ENCODE measurements at regions of chr15 and their contacts with region 1.

Region 1: DNA sequence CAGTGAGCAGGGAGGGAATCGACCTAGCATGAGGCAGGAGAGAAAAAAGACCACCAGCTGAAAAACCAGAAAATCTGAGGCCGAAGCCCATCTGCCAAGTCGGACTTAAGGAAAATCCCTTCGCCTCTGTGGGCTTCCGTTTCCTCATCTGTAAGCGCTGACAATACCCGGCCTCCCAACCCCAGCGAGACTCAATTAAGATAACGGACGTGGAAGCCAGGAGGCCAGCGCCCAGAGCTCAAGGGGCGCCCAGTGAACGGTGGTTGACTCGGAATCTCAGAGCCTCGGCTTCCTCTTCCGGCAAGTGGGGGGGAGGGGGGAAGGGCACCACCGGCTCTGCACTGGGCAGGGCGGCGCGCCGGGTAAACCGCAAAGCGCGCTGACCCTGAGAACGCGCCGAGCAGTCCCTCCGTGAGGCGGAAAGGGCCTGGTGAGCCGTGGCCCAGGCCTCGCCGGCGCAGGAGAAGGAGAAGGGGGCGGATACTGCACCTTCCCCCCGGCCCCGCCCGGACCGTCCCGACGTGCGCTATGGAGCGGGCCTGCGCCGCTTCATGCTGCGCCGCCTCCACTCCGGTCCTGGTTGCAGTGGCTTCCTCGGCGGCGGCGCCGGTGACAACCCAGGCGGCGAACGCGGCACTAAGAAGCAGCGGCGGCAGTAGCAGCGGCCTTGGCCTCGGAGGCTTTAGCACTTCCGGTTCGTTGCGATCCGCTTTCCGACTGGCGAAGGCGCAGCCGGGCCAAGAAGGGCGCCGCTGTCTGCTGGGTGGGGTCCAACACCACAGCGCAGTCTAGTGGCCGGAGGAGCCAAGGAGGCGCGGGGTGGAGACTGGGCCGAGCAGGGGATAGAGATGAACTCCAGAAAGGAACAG is at the start of gene DPP8:
- DNase-seq: peak; percentile 92
- CTCF ChIP-seq: peak; percentile 99

Region 2: DNA sequence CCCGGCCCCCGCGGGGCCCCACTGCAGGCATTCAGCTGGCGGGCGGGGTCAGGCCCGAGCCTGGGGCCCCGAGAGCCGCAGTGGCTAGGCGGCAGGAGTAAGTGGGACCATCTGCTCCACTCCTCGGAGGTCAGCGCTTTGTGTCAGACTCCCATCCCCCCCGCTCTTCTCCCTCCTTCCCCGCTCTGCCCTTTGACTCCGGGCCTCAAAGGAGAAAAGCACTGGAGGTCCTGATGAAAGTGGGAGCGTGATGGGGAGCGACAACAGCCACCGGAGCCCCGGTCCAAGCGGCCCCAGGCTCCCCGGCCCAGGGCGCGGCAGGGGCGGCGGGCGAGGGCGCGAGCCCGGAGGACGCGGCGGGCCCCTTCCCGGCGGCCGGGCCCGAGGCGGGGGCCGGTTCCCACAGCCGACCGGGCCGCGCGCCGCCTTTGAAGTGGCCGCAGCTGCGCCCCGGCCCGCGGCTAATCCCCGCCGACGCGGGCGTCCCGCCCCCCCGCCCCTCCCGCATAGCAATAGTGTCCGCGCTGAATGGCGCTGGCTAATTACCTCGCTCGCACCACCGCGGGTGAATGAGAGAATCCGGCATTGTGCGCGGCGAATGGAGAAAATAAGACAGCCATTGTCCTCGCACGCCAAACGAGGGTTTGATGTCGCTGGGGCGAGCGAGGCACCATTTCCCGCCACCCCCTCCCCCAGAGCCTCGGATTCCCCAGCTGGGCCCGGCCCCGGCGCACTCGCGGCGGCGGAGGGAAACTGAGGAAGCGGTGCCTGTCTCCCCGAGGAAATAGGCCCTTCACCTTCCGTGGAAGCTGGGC is 161.9 kb before region 1 on chr15:
- CTCF ChIA-PET with region 1: no interaction called
- POLR2A ChIA-PET with region 1: no interaction called
- DNase-seq: no peak
- CTCF ChIP-seq: no peak

Region 3: GRCh38 chr15:65395567-65396185 is 121.6 kb before region 1 on chr15:
- CTCF ChIA-PET with region 1: no interaction called
- POLR2A ChIA-PET with region 1: no interaction called
- DNase-seq: no peak
- CTCF ChIP-seq: no peak

Region 4: GRCh38 chr15:65476903-65477302 is 40.3 kb before region 1 on chr15:
- CTCF ChIA-PET with region 1: no interaction called
- POLR2A ChIA-PET with region 1: no interaction called
- DNase-seq: no peak
- CTCF ChIP-seq: no peak

Region 5: DNA sequence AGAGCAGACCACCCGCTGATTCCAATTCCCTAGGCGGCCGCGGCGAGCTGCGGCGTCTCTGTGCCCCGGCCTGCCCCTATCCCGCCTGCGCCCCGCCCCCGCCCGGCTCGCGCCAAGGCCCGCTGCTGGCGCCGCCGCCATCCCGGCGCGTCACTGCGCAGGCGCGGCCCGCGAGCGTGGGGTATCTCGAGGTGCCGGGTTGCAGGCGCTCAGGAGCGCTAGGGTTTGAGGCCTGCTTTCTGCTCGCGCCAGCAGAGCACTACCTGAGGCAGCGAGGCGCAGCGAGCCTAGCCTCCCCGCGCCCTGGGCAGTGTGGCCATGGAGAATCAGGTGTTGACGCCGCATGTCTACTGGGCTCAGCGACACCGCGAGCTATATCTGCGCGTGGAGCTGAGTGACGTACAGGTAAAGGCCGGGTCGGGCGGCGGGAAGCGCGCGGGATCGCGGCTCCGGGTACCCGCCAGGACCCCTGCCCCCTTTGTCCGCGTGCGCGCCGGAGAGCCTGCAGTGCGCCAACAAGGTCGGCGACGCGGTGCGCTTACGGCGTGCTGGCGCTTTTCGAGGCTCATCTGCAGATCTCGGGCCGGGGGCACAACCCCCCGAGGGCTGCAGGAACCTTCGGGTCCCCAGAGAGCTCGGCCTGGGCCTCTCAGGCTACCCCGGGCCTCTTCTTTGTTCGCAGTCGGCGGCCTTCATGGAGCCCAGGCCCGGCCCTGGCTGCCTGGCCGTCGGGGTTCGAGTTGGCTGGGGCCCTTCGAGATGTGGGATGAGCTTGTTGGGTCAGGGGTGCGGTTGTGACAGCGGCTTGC is 13.3 kb after region 1 on chr15 and contains the start of gene HACD3:
- CTCF ChIA-PET with region 1: interaction called, 11 read pairs
- POLR2A ChIA-PET with region 1: interaction called, 4 read pairs
- DNase-seq: peak; percentile 98
- CTCF ChIP-seq: no peak

Measured in GM10248 (cell line).